Panc1 (cell line): ENCODE measurements at regions of chr6 and their contacts with region 1.

Region 1: DNA sequence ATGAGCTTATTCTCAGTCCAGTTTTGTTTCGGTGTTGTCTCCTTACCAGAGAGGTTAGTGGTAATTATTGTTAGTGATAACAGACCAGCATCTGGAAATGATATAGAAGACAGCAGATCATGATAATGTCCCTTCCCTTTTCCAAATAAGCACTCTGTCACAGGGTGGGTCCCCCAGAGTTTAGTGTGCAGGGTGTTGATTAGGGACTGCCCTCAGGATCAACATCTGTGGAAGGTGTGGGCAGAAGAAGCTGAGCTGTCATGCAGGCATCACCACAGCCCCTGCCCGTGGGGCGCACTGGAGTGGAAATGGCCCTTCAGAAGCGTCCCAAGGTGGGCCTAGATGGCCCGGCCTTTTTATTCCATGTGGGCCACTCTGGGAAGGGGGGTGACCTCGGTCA is 67.6 kb upstream of the DTNBP1 start:
- DNase-seq: no peak
- ATAC-seq: no peak
- H3K4me3 ChIP-seq: no peak overlapping the region
- H3K27ac ChIP-seq: no peak overlapping the region
- H3K4me1 ChIP-seq: no peaks in the 10 kb centered on the region
- H3K27me3 ChIP-seq: peaks cover 6% of the 10 kb centered on the region; the same call in 1 of the 2 replicates
- CTCF ChIP-seq: no peak

Region 2: GRCh38 chr6:16057446-16057845 is 327.0 kb after region 1 on chr6:
- CTCF ChIA-PET with region 1: interaction called, 13 read pairs
- POLR2A ChIA-PET with region 1: no interaction called
- in situ Hi-C with region 1: no loop called
- intact Hi-C with region 1: no loop called
- DNase-seq: no peak
- ATAC-seq: no peak
- H3K4me3 ChIP-seq: no peak overlapping the region
- H3K27ac ChIP-seq: no peak overlapping the region
- H3K4me1 ChIP-seq: no peaks in the 10 kb centered on the region
- H3K27me3 ChIP-seq: no peaks in the 10 kb centered on the region
- CTCF ChIP-seq: no peak